Activated naive CD4-positive, alpha-beta T cell treated with anti-CD3 and anti-CD28 coated beads for 36 hours (primary cell): ENCODE measurements at regions of chr1 and their contacts with region 1.

Region 1: DNA sequence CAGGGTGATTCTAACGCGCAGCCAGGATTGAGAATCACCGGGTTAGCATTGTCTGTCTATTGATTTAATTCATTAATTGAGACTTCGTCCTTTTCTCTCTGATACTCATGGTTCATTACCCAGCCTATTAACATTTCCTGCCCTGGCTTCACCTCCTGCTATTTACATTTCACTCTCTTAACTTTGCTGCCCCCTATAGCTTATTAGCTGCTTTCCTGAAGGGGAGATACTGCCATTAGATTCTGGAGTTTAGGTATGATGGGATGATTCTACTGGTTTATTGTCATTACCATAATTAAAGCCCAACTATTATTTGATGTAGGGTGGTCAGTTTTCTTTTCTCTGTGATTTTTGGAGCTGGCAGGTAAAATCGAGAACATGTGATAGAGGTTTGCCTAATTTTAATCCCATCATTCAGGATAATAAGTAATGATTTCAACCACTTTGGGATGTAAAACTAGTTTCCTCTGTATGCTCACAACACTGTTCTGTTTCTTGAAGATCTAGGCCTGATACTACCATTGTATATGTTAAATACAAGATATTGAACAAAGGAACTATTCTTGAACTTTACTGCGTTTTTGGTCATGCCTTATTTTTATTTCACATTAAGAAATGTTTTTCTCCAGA is 6.4 kb downstream of the PPP2R5A start:
- DNase-seq: no peak
- H3K4me3 Mint-ChIP-seq: no peak overlapping the region
- H3K27ac Mint-ChIP-seq: no peak overlapping the region
- H3K4me1 Mint-ChIP-seq: peaks cover 78% of the 10 kb centered on the region
- H3K27me3 Mint-ChIP-seq: no peaks in the 10 kb centered on the region

Region 2: GRCh38 chr1:212012034-212012740 is 279.4 kb before region 1 on chr1:
- CTCF ChIA-PET with region 1: no interaction called
- intact Hi-C with region 1: loop called (anchors 1 kb)
- DNase-seq: peak; percentile 84
- H3K4me3 Mint-ChIP-seq: no peak overlapping the region
- H3K27ac Mint-ChIP-seq: no peak overlapping the region
- H3K4me1 Mint-ChIP-seq: no peaks in the 10 kb centered on the region
- H3K27me3 Mint-ChIP-seq: no peaks in the 10 kb centered on the region

Region 3: GRCh38 chr1:212070720-212071302 is 220.8 kb before region 1 on chr1:
- CTCF ChIA-PET with region 1: interaction called, 4 read pairs
- intact Hi-C with region 1: loop called (anchors 1 kb)
- DNase-seq: no peak
- H3K4me3 Mint-ChIP-seq: no peak overlapping the region
- H3K27ac Mint-ChIP-seq: no peak overlapping the region
- H3K4me1 Mint-ChIP-seq: no peaks in the 10 kb centered on the region
- H3K27me3 Mint-ChIP-seq: no peaks in the 10 kb centered on the region

Region 4: GRCh38 chr1:212162635-212163034 is 129.0 kb before region 1 on chr1:
- CTCF ChIA-PET with region 1: no interaction called
- intact Hi-C with region 1: no loop called
- DNase-seq: peak; percentile 60
- H3K4me3 Mint-ChIP-seq: no peak overlapping the region
- H3K27ac Mint-ChIP-seq: no peak overlapping the region
- H3K4me1 Mint-ChIP-seq: peaks cover 32% of the 10 kb centered on the region
- H3K27me3 Mint-ChIP-seq: no peaks in the 10 kb centered on the region

Region 5: GRCh38 chr1:212309967-212310366 is 18.3 kb after region 1 on chr1:
- CTCF ChIA-PET with region 1: interaction called, 10 read pairs
- intact Hi-C with region 1: loop called (anchors 2 kb)
- DNase-seq: no peak
- H3K4me3 Mint-ChIP-seq: no peak overlapping the region
- H3K27ac Mint-ChIP-seq: no peak overlapping the region
- H3K4me1 Mint-ChIP-seq: peaks cover 43% of the 10 kb centered on the region
- H3K27me3 Mint-ChIP-seq: no peaks in the 10 kb centered on the region

Region 6: DNA sequence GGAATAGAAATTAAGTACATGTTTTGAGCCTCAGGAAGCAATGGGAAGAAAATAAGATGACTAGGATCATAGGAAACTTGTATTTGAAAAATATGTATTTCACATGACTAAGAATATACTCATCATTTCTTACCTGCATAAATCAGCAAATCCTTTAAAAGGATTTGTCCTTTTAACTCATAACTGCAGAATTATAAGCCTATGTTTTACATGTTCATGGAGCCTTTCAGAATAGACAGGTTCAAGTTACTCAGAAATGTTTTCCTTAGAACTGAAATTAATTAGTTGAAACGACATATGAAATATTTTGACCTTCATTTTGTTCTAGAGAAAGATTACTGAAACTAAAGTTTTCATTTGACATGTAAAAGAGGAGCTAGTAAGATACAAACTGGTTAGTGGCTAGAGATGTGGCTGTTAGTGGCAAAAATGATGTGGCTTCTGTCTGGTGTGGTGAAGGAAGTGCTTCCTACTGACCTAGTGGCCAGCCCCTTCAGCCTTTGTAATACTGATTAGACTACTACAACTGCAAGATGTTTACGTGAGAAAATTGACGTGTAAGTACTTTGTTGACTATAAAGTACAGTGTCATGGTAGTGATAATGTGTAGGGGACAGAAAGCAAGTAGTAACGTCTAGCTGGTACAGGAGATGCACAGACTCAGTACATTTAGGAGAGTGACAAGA is 68.3 kb after region 1 on chr1:
- CTCF ChIA-PET with region 1: interaction called, 3 read pairs
- intact Hi-C with region 1: loop called (anchors 2 kb)
- DNase-seq: peak; percentile 13
- H3K4me3 Mint-ChIP-seq: no peak overlapping the region
- H3K27ac Mint-ChIP-seq: peak overlapping the region; percentile 51
- H3K4me1 Mint-ChIP-seq: peaks cover 8% of the 10 kb centered on the region
- H3K27me3 Mint-ChIP-seq: no peaks in the 10 kb centered on the region